ENCODE measurements at regions of chr2 and their contacts with region 1.

Region 1: GRCh38 chr2:240704651-240705050 is 13.0 kb downstream of the AQP12A start:
- DNase-seq: no peak
- ATAC-seq: no peak
- H3K4me3 ChIP-seq: no peak overlapping the region
- H3K27ac ChIP-seq: no peak overlapping the region
- H3K4me1 ChIP-seq: no peaks in the 10 kb centered on the region
- H3K27me3 ChIP-seq: peaks cover 8 to 34% (median 13%) of the 10 kb centered on the region in 3 donors
- CTCF ChIP-seq: no peak
- POLR2A ChIP-seq: no peak

Region 2: GRCh38 chr2:240513549-240514287 is 190.9 kb before region 1 on chr2:
- in situ Hi-C with region 1: loop called in 3 of 4 experiments (anchors 25 kb)
- intact Hi-C with region 1: no loop called
- DNase-seq: peak; percentile 17 to 56
- ATAC-seq: peak in 1 of 2 donors; percentile 39
- H3K4me3 ChIP-seq: no peak overlapping the region
- H3K27ac ChIP-seq: no peak overlapping the region
- H3K4me1 ChIP-seq: no peaks in the 10 kb centered on the region
- H3K27me3 ChIP-seq: no peaks in the 10 kb centered on the region
- CTCF ChIP-seq: peak; percentile 40 to 77 (median 69)
- POLR2A ChIP-seq: no peak

Region 3: GRCh38 chr2:240655931-240656886 is 48.4 kb before region 1 on chr2:
- in situ Hi-C with region 1: no loop called
- intact Hi-C with region 1: no loop called
- DNase-seq: no peak
- ATAC-seq: no peak
- H3K4me3 ChIP-seq: no peak overlapping the region
- H3K27ac ChIP-seq: no peak overlapping the region
- H3K4me1 ChIP-seq: no peaks in the 10 kb centered on the region
- H3K27me3 ChIP-seq: peaks cover 0 to 13% (median 0%) of the 10 kb centered on the region in 3 donors
- CTCF ChIP-seq: no peak
- POLR2A ChIP-seq: no peak

Measured in gastrocnemius medialis (tissue), 4 donors.